T-cell (primary cell): ENCODE measurements at regions of chr10 and their contacts with region 1.

Region 1: GRCh38 chr10:36336315-36336714 is 694.2 kb upstream of the FZD8 start:
- DNase-seq: no peak
- ATAC-seq: no peak
- H3K4me3 ChIP-seq: no peak overlapping the region
- H3K4me3 Mint-ChIP-seq: no peak overlapping the region
- H3K27ac ChIP-seq: no peak overlapping the region
- H3K27ac Mint-ChIP-seq: no peak overlapping the region
- H3K4me1 ChIP-seq: no peaks in the 10 kb centered on the region
- H3K4me1 Mint-ChIP-seq: no peaks in the 10 kb centered on the region
- H3K27me3 ChIP-seq: no peaks in the 10 kb centered on the region
- H3K27me3 Mint-ChIP-seq: no peaks in the 10 kb centered on the region

Region 2: DNA sequence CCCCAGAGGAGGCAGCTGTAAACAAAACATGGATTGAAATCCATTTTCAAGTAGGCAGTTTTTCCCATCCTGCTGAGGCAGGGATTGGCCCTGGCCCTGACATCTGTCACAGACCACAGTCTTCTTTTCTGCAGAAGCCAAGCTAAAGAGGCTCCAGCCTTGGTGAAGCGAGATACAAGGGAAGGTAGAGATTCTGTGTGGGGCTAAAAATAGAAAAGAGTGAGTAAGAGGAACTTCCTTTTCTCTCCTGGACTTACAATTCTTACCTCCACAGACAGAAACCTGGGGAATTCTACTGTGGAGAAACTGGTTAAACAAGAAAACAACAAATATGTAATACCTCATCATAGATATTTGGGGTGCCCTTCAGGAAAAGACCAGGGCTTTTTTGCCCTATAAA is 69.4 kb before region 1 on chr10:
- CTCF ChIA-PET with region 1: interaction called in 1 of 2 experiments, 11 read pairs
- POLR2A ChIA-PET with region 1: no interaction called
- DNase-seq: no peak
- ATAC-seq: no peak
- H3K4me3 ChIP-seq: no peak overlapping the region
- H3K4me3 Mint-ChIP-seq: no peak overlapping the region
- H3K27ac ChIP-seq: no peak overlapping the region
- H3K27ac Mint-ChIP-seq: no peak overlapping the region
- H3K4me1 ChIP-seq: no peaks in the 10 kb centered on the region
- H3K4me1 Mint-ChIP-seq: no peaks in the 10 kb centered on the region
- H3K27me3 ChIP-seq: no peaks in the 10 kb centered on the region
- H3K27me3 Mint-ChIP-seq: no peaks in the 10 kb centered on the region